Psoas muscle (tissue), 8 donors: ENCODE measurements at regions of chr11 and their contacts with region 1.

Region 1: DNA sequence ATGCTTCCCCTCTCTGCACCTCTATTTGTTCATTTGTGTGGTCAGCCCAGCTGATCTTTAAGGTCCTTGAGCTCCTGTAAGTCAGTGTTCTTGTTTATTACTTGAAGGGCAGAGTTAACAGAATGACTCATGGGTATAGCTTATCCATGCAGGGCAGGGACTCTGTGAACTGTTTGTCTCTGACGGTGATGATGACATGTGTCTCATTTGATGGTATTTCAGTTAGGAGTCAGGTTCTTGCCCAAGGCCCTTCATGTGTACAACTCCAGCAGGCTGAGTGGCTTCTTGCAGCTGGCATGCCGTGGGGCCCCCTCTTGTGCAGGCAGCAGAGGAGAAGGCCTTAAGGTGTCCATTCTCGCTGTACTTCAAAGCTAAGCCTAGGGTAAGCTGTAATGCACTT is 165.1 kb downstream of the DBX1 start:
- DNase-seq: peak; percentile 55 to 71
- ATAC-seq: peak; percentile 96 to 97 (median 96)
- H3K4me3 ChIP-seq: no peak overlapping the region
- H3K27ac ChIP-seq: peak overlapping the region; percentile 50
- H3K4me1 ChIP-seq: peaks cover 20% of the 10 kb centered on the region
- H3K27me3 ChIP-seq: no peaks in the 10 kb centered on the region
- CTCF ChIP-seq: no peak

Region 2: GRCh38 chr11:19380375-19380774 is 614.8 kb before region 1 on chr11:
- intact Hi-C with region 1: no loop called
- DNase-seq: peak in 1 of 2 donors; percentile 44
- ATAC-seq: peak in 2 of 4 donors; percentile 54 to 67
- H3K4me3 ChIP-seq: no peak overlapping the region
- H3K27ac ChIP-seq: no peak overlapping the region
- H3K4me1 ChIP-seq: no peaks in the 10 kb centered on the region
- H3K27me3 ChIP-seq: peaks cover 0 to 17% (median 0%) of the 10 kb centered on the region in 3 donors
- CTCF ChIP-seq: no peak

Region 3: GRCh38 chr11:19938169-19938856 is 56.8 kb before region 1 on chr11:
- intact Hi-C with region 1: no loop called
- DNase-seq: peak in 1 of 2 donors; percentile 40
- ATAC-seq: peak in 2 of 4 donors; percentile 44 to 47
- H3K4me3 ChIP-seq: no peak overlapping the region
- H3K27ac ChIP-seq: no peak overlapping the region
- H3K4me1 ChIP-seq: no peaks in the 10 kb centered on the region
- H3K27me3 ChIP-seq: no peaks in the 10 kb centered on the region
- CTCF ChIP-seq: peak; percentile 69

Region 4: GRCh38 chr11:20056109-20056949 is 61.2 kb after region 1 on chr11:
- intact Hi-C with region 1: loop called in 1 of 2 experiments (anchors 10 kb)
- DNase-seq: peak; percentile 30 to 80
- ATAC-seq: peak; percentile 58 to 84 (median 76)
- H3K4me3 ChIP-seq: no peak overlapping the region
- H3K27ac ChIP-seq: peak overlapping the region; percentile 70
- H3K4me1 ChIP-seq: peaks cover 52% of the 10 kb centered on the region
- H3K27me3 ChIP-seq: no peaks in the 10 kb centered on the region
- CTCF ChIP-seq: no peak